IMR-90 (cell line): ENCODE measurements at regions of chr2 and their contacts with region 1.

Region 1: GRCh38 chr2:47767880-47768609 is 14.9 kb upstream of the MSH6 start:
- DNase-seq: peak; percentile 30
- ATAC-seq: peak; percentile 91
- H3K4me3 ChIP-seq: peak overlapping the region; percentile 49; the same call in 1 of the 2 replicates
- H3K27ac ChIP-seq: no peak overlapping the region
- H3K4me1 ChIP-seq: peaks cover 2% of the 10 kb centered on the region; the same call in 1 of the 2 replicates
- H3K27me3 ChIP-seq: peaks cover 8% of the 10 kb centered on the region; the same call in 1 of the 2 replicates
- CTCF ChIP-seq: peak; percentile 92
- POLR2A ChIP-seq: 0 out of 2 replicates have a peak, but pooled peaks have one; percentile 29
- RAD21 ChIP-seq: peak; percentile 95

Region 2: DNA sequence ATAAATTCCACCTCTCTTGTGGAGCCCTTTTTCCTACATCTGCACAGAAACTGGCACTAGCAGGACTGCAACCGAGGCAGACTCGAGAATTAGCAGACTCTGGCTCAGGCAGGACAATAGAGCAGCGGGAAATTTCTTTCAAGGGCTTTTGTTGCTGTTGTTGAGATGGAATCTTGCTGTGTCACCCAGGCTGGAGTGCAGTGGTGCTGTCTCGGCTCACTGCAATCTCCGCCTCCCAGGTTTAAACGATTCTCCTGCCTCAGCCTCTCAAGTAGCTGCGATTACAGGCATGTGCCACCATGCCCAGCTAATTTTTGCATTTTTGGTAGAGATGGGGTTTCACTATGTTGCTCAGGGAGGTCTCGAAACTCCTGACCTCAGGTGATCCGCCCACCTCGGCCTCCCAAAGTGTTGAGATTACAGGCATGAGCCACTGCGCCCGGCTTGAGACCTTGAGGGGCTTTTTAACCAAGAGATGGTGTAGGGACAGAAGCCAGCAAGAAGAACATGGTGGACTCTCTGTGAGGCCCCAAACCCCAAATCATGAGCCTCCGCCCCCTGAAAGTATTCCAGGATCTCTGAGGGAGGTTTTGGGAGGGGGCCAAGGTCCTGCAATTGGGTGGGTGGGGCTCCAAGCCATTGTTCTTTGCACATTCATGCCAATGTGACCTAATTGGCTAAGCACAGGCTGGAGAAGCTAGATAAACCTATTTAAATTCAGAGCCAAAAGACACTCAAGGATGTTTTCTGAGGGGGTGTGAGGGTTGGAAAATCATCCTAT is 433.5 kb before region 1 on chr2:
- CTCF ChIA-PET with region 1: interaction called, 7 read pairs
- POLR2A ChIA-PET with region 1: no interaction called
- dilution Hi-C with region 1: no loop called
- in situ Hi-C with region 1: loop called (anchors 5 kb)
- intact Hi-C with region 1: loop called (anchors 1 kb)
- DNase-seq: no peak
- ATAC-seq: no peak
- H3K4me3 ChIP-seq: no peak overlapping the region
- H3K27ac ChIP-seq: no peak overlapping the region
- H3K4me1 ChIP-seq: no peaks in the 10 kb centered on the region
- H3K27me3 ChIP-seq: peaks cover 8% of the 10 kb centered on the region
- CTCF ChIP-seq: no peak
- POLR2A ChIP-seq: no peak
- RAD21 ChIP-seq: no peak

Region 3: DNA sequence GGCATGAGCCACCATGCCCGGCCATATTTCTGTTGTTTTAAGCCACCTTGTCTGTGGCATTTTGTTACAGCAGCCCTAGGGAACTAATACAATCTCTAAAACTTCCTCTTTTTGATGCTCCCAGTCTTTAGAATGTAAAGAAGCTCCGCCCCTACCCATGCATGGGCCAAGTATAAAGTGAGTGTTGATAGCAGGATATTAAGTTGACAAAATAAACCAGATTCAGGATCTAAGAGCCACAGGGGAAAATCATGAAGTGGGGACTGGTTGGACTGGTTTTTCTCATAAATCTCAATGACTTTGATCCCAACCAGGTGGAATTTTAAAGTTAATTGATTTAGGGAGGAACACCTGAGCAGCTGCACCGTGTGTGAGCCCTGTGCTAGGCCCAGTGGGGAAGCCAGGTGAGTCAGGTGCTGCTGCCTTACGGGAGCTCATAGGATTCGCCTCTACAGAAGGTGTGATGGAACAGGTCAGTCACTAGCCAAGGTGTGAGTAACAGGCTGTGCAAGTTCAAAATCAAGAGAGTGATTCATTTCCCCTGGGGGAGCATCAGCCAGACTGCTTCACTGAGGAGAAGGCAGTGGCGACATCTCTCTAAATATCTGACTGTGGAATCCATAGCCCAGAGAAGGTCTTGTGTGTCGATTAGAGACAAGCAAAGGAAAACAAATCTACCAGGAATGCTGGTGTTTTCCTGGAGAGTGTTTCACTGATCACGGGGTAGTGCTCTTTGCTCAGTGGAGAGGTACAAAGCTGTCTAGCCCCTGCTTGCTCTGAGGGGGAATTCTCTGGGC is 428.1 kb before region 1 on chr2:
- CTCF ChIA-PET with region 1: interaction called, 7 read pairs
- POLR2A ChIA-PET with region 1: no interaction called
- dilution Hi-C with region 1: no loop called
- in situ Hi-C with region 1: loop called (anchors 5 kb)
- intact Hi-C with region 1: loop called (anchors 1 kb)
- DNase-seq: peak; percentile 61
- ATAC-seq: peak; percentile 16; the same call in 1 of the 2 replicates
- H3K4me3 ChIP-seq: no peak overlapping the region
- H3K27ac ChIP-seq: no peak overlapping the region
- H3K4me1 ChIP-seq: no peaks in the 10 kb centered on the region
- H3K27me3 ChIP-seq: no peaks in the 10 kb centered on the region
- CTCF ChIP-seq: no peak
- POLR2A ChIP-seq: no peak
- RAD21 ChIP-seq: no peak

Region 4: GRCh38 chr2:47437287-47437686 is 330.8 kb before region 1 on chr2:
- CTCF ChIA-PET with region 1: interaction called, 39 read pairs
- POLR2A ChIA-PET with region 1: no interaction called
- dilution Hi-C with region 1: no loop called
- in situ Hi-C with region 1: loop called (anchors 5 kb)
- intact Hi-C with region 1: loop called (anchors 1 kb)
- DNase-seq: peak; percentile 47
- ATAC-seq: peak; percentile 44; the same call in 1 of the 2 replicates
- H3K4me3 ChIP-seq: no peak overlapping the region
- H3K27ac ChIP-seq: no peak overlapping the region
- H3K4me1 ChIP-seq: no peaks in the 10 kb centered on the region
- H3K27me3 ChIP-seq: no peaks in the 10 kb centered on the region
- CTCF ChIP-seq: peak; percentile 52
- POLR2A ChIP-seq: no peak
- RAD21 ChIP-seq: peak; percentile 60